ENCODE measurements at regions of chr12 and their contacts with region 1.

Region 1: GRCh38 chr12:106302401-106303201 is at the start of gene TCP11L2:
- DNase-seq: peak; percentile 93 to 95 (median 94)
- H3K4me3 ChIP-seq: peak within 1 kb of the TSS; percentile 86 to 98
- H3K4me3 Mint-ChIP-seq: peak within 1 kb of the TSS; percentile 93 to 99 (median 96)
- H3K27ac ChIP-seq: peak within 1 kb of the TSS; percentile 97
- H3K27ac Mint-ChIP-seq: peak within 1 kb of the TSS; percentile 95 to 100 (median 99)
- H3K4me1 ChIP-seq: peaks cover 59% of the 10 kb centered on the region
- H3K4me1 Mint-ChIP-seq: peaks cover 49 to 73% (median 56%) of the 10 kb centered on the region in 4 donors
- H3K27me3 ChIP-seq: no peaks in the 10 kb centered on the region
- H3K27me3 Mint-ChIP-seq: peaks cover 0 to 1% of the 10 kb centered on the region in 2 donors
- total RNA-seq, gene TCP11L2: 185 to 186 TPM

Region 2: GRCh38 chr12:106229036-106229591 is 73.5 kb before region 1 on chr12:
- CTCF ChIA-PET with region 1: interaction called, 49 read pairs
- POLR2A ChIA-PET with region 1: interaction called, 87 read pairs
- intact Hi-C with region 1: loop called (anchors 1 kb)
- DNase-seq: no peak
- H3K4me3 ChIP-seq: no peak overlapping the region
- H3K4me3 Mint-ChIP-seq: peak overlapping the region in 1 of 8 donors; percentile 46
- H3K27ac ChIP-seq: no peak overlapping the region
- H3K27ac Mint-ChIP-seq: peak overlapping the region in 5 of 7 donors; percentile 8 to 75 (median 24)
- H3K4me1 ChIP-seq: peaks cover 18% of the 10 kb centered on the region
- H3K4me1 Mint-ChIP-seq: peaks cover 12 to 19% (median 16%) of the 10 kb centered on the region in 4 donors
- H3K27me3 ChIP-seq: no peaks in the 10 kb centered on the region
- H3K27me3 Mint-ChIP-seq: no peaks in the 10 kb centered on the region

Region 3: DNA sequence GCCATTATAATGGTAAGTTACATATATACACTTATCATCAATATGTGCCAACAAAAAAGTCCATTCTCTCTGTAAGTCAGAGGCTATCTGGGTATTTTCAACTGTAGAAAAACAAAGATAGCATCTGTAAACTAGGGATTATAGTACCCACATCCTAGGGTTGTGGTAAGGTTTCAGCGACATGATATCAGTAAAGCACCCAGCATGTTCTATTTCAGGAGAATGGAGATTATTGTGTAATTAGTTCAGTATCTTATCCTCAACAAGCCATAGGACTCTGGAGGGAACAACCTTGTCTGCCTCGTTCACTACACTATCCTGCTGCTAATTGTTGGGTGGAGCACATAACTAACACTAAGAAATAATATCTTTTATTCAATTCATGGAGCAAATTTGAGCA is 35.1 kb before region 1 on chr12:
- CTCF ChIA-PET with region 1: no interaction called
- POLR2A ChIA-PET with region 1: interaction called, 29 read pairs
- intact Hi-C with region 1: no loop called
- DNase-seq: peak in 2 of 5 donors; percentile 27 to 53
- H3K4me3 ChIP-seq: no peak overlapping the region
- H3K4me3 Mint-ChIP-seq: peak overlapping the region in 2 of 8 donors; percentile 18 to 53
- H3K27ac ChIP-seq: no peak overlapping the region
- H3K27ac Mint-ChIP-seq: peak overlapping the region in 2 of 7 donors; percentile 66 to 74
- H3K4me1 ChIP-seq: peaks cover 13% of the 10 kb centered on the region
- H3K4me1 Mint-ChIP-seq: peaks cover 10 to 18% (median 14%) of the 10 kb centered on the region in 4 donors
- H3K27me3 ChIP-seq: no peaks in the 10 kb centered on the region
- H3K27me3 Mint-ChIP-seq: no peaks in the 10 kb centered on the region

Region 4: DNA sequence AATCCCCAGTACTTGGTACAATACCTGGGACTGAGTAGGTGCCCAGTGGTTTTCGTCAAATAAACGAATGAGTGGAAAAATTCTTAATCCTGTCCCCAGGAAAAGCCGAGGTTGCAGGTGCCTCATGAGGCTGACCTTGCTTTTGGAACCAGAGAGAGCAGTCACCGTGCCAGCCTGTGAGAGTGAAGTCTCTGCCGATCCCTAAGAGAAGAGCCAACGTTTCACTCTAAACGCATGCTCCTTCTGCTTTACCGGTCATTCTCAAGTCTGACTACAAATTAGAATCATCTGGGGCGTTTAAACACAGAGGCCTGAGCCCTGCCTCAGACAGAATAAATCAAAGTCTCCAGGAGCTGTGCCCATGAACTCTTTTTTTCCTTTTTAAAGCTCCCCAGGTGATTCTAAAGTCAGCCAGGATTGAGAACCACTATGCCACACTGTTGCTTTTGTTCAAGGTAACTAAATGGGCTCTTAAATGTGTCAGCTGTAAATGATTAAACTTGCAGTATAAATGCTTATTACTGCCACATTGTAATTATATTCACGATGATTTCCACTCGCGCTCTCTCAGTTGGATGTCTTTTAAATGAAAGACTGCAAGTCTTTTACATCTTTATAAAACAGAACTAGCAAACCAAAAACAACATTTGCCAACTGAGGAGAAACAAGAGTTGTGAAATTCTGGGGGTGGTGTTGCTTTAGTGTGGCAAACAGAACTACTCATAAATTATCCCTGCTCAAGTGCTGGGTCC is 26.8 kb after region 1 on chr12:
- CTCF ChIA-PET with region 1: interaction called, 3 read pairs
- POLR2A ChIA-PET with region 1: interaction called, 33 read pairs
- intact Hi-C with region 1: no loop called
- DNase-seq: no peak
- H3K4me3 ChIP-seq: no peak overlapping the region
- H3K4me3 Mint-ChIP-seq: no peak overlapping the region
- H3K27ac ChIP-seq: no peak overlapping the region
- H3K27ac Mint-ChIP-seq: peak overlapping the region in 1 of 7 donors; percentile 37
- H3K4me1 ChIP-seq: no peaks in the 10 kb centered on the region
- H3K4me1 Mint-ChIP-seq: peaks cover 13 to 29% (median 16%) of the 10 kb centered on the region in 4 donors
- H3K27me3 ChIP-seq: no peaks in the 10 kb centered on the region
- H3K27me3 Mint-ChIP-seq: no peaks in the 10 kb centered on the region

Region 5: GRCh38 chr12:106955377-106956047 is 652.9 kb after region 1 on chr12 and contains the start of gene TMEM263:
- CTCF ChIA-PET with region 1: no interaction called
- POLR2A ChIA-PET with region 1: interaction called, 18 read pairs
- intact Hi-C with region 1: loop called (anchors 5 kb)
- DNase-seq: peak; percentile 89 to 91 (median 90)
- H3K4me3 ChIP-seq: peak within 1 kb of the TSS; percentile 74 to 92
- H3K4me3 Mint-ChIP-seq: peak within 1 kb of the TSS; percentile 92 to 98 (median 96)
- H3K27ac ChIP-seq: peak within 1 kb of the TSS; percentile 76
- H3K27ac Mint-ChIP-seq: peak within 1 kb of the TSS; percentile 93 to 99 (median 96)
- H3K4me1 ChIP-seq: peaks cover 17% of the 10 kb centered on the region
- H3K4me1 Mint-ChIP-seq: peaks cover 20 to 48% (median 25%) of the 10 kb centered on the region in 4 donors
- H3K27me3 ChIP-seq: no peaks in the 10 kb centered on the region
- H3K27me3 Mint-ChIP-seq: no peaks in the 10 kb centered on the region
- total RNA-seq, gene TMEM263: 31.2 to 32.9 TPM